Activated CD4-positive, alpha-beta T cell treated with anti-CD3 and anti-CD28 coated beads, Interleukin-2, amount 10 ng/mL, durations not matched to agents 24 days and 14 days (primary cell): ENCODE measurements at regions of chr18 and their contacts with region 1.

Region 1: DNA sequence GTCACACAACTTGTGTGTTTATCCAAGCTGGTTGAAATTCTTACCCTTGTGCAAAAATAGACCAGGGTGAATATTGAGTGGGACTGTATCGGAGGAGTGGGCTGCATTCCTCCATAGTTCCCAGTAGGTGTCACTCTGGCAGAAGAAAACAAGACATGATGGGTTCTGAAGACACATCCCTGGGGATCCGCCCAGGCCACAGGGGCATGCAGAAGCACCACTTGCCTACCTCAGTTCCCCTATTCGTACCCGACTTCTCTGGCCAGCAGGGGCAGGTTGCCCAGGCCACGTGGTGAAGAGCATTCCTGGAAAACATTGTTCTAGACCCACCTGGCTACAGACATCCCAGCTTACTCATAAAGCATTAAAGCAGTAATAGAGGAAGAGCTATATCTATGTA is 168.2 kb downstream of the FAM210A start:
- DNase-seq: peak; percentile 77
- H3K4me3 Mint-ChIP-seq: no peak overlapping the region
- H3K27ac Mint-ChIP-seq: peak overlapping the region; percentile 48
- H3K4me1 Mint-ChIP-seq: peaks cover 29% of the 10 kb centered on the region
- H3K27me3 Mint-ChIP-seq: no peaks in the 10 kb centered on the region

Region 2: GRCh38 chr18:13577091-13577697 is 19.1 kb after region 1 on chr18:
- intact Hi-C with region 1: loop called (anchors 1 kb)
- DNase-seq: peak; percentile 85
- H3K4me3 Mint-ChIP-seq: peak overlapping the region; percentile 71
- H3K27ac Mint-ChIP-seq: peak overlapping the region; percentile 82
- H3K4me1 Mint-ChIP-seq: peaks cover 51% of the 10 kb centered on the region
- H3K27me3 Mint-ChIP-seq: no peaks in the 10 kb centered on the region

Region 3: GRCh38 chr18:13585379-13586153 is 27.4 kb after region 1 on chr18:
- intact Hi-C with region 1: loop called (anchors 1 kb)
- DNase-seq: no peak
- H3K4me3 Mint-ChIP-seq: no peak overlapping the region
- H3K27ac Mint-ChIP-seq: no peak overlapping the region
- H3K4me1 Mint-ChIP-seq: peaks cover 59% of the 10 kb centered on the region
- H3K27me3 Mint-ChIP-seq: no peaks in the 10 kb centered on the region

Region 4: DNA sequence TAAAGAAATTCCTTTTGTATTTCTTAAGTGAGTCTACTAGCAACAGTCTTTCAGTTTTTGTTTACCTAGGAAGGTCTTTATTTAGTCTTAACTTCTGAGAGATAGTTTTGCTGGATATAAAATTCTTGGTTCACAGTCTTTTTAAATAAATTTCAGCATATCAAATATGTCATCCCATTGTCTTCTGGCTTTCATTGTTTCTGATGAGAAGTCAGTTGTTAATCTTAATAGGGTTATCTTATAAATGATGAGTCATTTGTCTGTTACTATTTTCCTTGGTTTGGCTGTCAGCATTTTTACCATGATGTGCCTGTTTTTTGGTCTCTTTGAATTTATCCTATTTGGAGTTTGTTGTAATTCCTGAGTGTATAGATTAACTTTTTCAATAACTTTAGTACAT is 38.9 kb after region 1 on chr18:
- intact Hi-C with region 1: no loop called
- DNase-seq: no peak
- H3K4me3 Mint-ChIP-seq: no peak overlapping the region
- H3K27ac Mint-ChIP-seq: no peak overlapping the region
- H3K4me1 Mint-ChIP-seq: peaks cover 14% of the 10 kb centered on the region
- H3K27me3 Mint-ChIP-seq: no peaks in the 10 kb centered on the region

Region 5: DNA sequence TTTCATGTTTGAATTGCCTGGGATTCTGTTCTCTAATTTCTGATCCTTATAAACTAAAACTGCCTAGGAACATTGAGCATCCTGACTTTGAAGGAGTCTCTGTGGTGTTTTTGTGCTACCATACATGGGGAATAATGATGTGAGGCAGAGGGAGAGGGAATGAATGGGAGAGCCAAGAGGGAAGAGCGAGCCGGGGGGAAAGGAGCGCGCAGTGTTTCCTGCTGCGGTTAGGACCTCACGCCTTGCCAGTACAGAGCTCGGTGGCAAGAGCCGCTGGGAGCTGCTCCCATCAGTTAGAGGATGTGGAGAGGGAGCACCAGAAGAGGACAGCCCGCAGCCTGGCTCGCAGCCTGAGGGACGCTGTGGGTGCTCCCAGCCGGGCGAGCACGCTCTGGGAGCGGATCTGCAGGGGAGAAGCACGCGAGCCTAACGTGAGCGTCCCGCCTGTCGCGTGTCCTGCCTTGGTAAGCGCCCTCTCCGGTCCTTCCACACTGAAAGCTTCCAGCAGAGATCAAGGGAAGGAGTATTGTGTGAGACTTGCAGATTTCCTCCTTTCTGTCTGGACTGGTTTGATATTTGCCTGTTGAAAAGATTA is 53.6 kb after region 1 on chr18:
- intact Hi-C with region 1: loop called (anchors 1 kb)
- DNase-seq: no peak
- H3K4me3 Mint-ChIP-seq: peak overlapping the region; percentile 94
- H3K27ac Mint-ChIP-seq: peak overlapping the region; percentile 97
- H3K4me1 Mint-ChIP-seq: peaks cover 72% of the 10 kb centered on the region
- H3K27me3 Mint-ChIP-seq: no peaks in the 10 kb centered on the region

Region 6: DNA sequence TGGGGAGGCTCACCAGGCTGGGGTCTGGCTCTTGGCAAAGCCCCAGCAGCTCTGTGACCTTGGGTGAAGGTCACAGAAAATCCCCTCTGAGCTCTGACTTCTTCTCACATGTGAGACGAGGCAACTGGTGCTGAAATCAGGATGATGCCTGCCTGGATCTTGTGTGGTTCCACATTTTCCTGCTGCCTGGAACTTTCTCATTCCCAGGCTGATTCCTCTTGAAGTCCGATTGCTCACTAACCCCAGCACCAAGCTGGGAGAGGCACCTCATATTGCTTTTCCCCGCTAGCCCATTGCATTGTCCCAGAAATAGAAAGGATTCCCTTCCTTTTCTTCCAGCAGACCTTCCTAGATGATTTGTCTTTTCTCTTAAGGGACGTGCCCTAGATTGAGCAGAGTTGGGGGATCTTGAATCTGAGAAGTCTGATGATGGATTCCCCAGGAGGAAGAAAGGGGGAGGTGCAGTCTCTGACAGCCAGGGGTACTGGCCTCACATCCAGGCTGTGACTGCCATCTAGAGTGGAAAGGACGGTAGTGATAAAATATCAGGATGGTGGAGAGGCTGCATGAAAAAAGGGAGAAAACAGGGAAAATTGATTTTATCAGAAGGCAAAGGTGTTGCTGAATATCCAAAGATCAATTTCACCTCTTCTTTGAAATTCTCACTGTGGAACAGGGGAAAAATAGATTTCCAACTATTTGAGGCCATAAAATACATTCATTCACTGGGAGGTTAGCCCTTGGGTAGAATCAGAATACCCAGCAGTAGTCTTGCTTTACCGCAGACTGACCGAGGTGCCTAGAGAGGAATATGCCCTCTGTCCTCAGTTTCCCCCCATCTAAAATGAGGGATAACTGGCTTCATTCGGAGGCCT is 72.0 kb after region 1 on chr18:
- intact Hi-C with region 1: loop called (anchors 1 kb)
- DNase-seq: peak; percentile 86
- H3K4me3 Mint-ChIP-seq: no peak overlapping the region
- H3K27ac Mint-ChIP-seq: peak overlapping the region; percentile 73
- H3K4me1 Mint-ChIP-seq: peaks cover 21% of the 10 kb centered on the region
- H3K27me3 Mint-ChIP-seq: no peaks in the 10 kb centered on the region

Region 7: DNA sequence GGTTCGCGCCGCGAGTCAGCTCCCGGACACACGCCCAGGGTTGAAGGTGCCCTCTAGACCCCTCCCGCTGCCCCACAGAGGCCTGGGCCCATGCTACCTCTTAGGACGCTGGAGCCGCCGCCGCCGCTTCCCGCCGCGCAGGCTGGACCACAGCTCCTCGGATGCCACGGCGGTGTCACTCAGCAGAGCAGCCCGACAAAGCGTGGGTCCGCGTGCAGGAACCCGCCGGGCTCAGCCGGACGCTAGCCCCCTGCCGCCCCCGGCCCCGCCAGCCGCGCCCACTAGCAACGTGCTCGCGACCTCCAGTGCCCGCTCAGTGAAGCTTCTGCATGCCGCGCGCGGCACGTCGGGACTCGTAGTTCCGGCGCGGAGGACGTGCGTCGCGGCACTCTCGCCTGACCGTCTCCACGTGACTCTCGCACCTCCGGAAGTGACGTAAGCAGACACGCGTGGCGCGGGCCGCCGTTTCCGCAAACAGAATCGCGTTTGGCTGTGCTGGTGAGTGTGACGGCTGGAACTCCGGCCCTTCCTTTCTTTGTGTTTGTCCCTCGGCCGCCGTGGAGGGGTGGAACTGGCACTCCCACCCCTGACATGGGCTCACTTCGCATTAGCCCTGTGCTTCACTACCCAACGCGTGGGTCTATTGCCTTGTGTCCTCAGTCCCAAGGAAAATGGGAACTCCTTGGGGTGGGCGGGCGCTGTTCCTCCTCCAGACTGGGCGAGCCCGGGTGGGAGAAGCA is 168.3 kb after region 1 on chr18 and contains the starts of genes FAM210A and RNMT:
- intact Hi-C with region 1: loop called (anchors 2 kb)
- DNase-seq: peak; percentile 99
- H3K4me3 Mint-ChIP-seq: peak within 1 kb of the TSS; percentile 85
- H3K27ac Mint-ChIP-seq: peak within 1 kb of the TSS; percentile 83
- H3K4me1 Mint-ChIP-seq: peaks cover 57% of the 10 kb centered on the region
- H3K27me3 Mint-ChIP-seq: no peaks in the 10 kb centered on the region
- total RNA-seq, gene FAM210A: 37.2 and 42.3 TPM in 2 replicates
- total RNA-seq, gene RNMT: 57.8 and 65.9 TPM in 2 replicates

Region 8: GRCh38 chr18:13800505-13801259 is 242.6 kb after region 1 on chr18:
- intact Hi-C with region 1: loop called (anchors 5 kb)
- DNase-seq: peak; percentile 81
- H3K4me3 Mint-ChIP-seq: peak overlapping the region; percentile 49
- H3K27ac Mint-ChIP-seq: no peak overlapping the region
- H3K4me1 Mint-ChIP-seq: peaks cover 7% of the 10 kb centered on the region
- H3K27me3 Mint-ChIP-seq: peaks cover 45% of the 10 kb centered on the region